ENCODE measurements at regions of chr9 and their contacts with region 1.

Region 1: DNA sequence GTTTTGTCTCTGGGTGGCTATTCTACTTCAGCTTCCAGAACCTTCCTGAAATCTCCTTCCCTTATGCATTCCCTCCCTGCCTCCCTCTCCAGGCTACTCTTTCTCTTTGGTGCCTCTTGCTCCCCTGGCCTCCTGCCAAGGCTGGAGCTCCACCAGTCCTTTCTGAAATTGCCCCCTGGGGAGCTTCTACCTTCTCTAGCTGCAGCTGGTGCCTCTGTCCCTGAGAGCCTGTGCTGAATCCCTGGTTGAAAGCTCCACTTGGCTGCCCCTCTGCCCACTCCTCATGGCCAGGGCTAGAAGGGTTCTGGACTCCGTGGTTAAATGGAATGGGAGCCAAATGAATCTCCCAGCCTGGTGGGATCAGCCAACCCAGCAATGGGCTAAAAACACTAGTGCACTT is 80.1 kb downstream of the COL15A1 start:
- DNase-seq: no peak
- CTCF ChIP-seq: no peak

Region 2: GRCh38 chr9:99012942-99013512 is 10.8 kb before region 1 on chr9:
- CTCF ChIA-PET with region 1: interaction called, 10 read pairs
- POLR2A ChIA-PET with region 1: no interaction called
- DNase-seq: no peak
- CTCF ChIP-seq: no peak

Measured in GM10248 (cell line).